ENCODE measurements at regions of chr11 and their contacts with region 1.

Region 1: DNA sequence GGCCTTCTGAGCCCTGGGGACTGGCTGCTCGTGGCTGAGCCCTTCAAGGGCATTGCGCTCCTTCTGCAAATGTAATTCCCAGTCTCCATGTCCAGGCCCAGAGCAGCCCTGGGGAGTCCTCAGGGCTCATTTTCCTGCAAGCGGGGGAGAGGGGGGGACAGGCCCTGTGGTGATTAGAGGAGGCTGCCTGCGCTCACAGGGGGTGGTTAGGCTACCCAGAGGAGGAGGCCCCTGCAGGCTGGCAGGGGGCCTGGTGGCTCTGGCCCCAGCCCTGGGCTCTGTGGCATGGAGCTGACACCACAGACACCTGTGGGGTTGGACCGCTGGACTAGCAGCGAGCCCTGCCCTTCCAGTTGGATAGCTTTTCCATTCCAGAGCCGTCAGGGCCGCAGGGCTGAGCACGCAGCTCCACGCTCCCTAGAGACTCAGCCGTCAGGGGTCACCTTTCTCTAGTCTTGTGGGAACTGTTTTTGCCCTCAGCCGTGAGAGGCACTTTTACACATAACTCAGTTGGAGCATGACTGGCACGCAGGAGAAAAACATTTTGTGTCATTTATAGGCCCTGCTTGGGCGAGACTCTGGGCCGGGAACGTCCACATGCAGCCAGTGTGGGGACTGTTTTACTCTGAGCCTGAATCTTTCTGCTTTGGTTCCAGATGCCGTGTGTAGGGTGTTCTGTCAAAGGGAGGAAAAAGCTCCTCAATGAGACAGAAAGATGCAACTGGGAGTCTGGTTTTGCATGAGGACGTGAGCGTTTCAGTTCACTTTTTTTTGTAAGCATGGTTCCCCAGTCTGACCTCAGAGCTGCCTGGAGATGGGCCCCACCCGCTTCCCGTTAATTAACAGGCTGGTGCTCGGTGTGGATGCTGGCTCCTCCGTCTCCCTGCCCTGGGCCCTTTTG is 58.1 kb downstream of the LRP5 start:
- DNase-seq: peak; percentile 54 to 78 (median 73)
- ATAC-seq: peak; percentile 30 to 46
- H3K4me3 ChIP-seq: no peak overlapping the region
- H3K27ac ChIP-seq: peak overlapping the region; percentile 75
- H3K4me1 ChIP-seq: peaks cover 20% of the 10 kb centered on the region
- H3K27me3 ChIP-seq: no peaks in the 10 kb centered on the region

Region 2: DNA sequence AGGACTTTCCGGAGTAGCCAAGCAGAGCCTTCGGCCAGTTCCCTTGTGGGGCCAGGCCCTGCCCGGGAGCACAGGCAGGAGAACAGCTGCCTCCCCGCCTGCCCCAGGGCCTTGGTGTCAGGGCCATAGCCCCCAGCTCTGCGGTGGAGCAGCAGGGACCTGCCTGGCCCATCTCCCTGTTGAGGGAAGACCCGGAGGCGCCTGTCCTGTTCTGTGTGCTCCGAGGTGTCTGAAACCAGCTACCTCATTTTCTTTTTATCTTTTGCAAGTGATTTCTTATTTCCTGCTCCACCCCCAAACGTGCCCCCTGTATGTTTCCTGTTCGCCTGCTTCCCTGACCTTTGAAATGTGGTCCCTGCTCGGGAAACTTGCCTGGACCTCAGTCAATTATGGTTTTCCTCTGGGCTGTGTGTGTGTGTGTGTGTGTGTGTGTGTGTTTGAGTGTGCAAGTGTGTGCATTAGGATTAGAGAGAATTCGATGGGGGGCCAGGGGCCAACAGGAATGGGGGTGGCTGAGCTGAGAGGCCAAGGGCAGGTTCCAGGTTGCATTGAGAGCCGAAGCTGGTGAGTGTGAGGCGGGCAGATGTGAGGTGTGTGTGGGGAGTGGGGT is 39.0 kb before region 1 on chr11:
- intact Hi-C with region 1: loop called in 1 of 4 experiments (anchors 5 kb)
- DNase-seq: peak in 2 of 3 donors; percentile 73 to 77
- ATAC-seq: peak; percentile 53 to 59
- H3K4me3 ChIP-seq: no peak overlapping the region
- H3K27ac ChIP-seq: peak overlapping the region; percentile 91
- H3K4me1 ChIP-seq: peaks cover 29% of the 10 kb centered on the region
- H3K27me3 ChIP-seq: no peaks in the 10 kb centered on the region

Region 3: GRCh38 chr11:68471360-68472340 is 101.2 kb after region 1 on chr11:
- intact Hi-C with region 1: no loop called
- DNase-seq: no peak
- ATAC-seq: peak in 1 of 2 donors; percentile 42
- H3K4me3 ChIP-seq: no peak overlapping the region
- H3K27ac ChIP-seq: no peak overlapping the region
- H3K4me1 ChIP-seq: peaks cover 37% of the 10 kb centered on the region
- H3K27me3 ChIP-seq: no peaks in the 10 kb centered on the region

Measured in right cardiac atrium (tissue), 5 donors.